Caco-2 (cell line): ENCODE measurements at regions of chr14 and their contacts with region 1.

Region 1: GRCh38 chr14:45134051-45134958 is at the start of gene FKBP3:
- DNase-seq: peak; percentile 95 to 98
- H3K4me3 ChIP-seq: peak within 1 kb of the TSS; percentile 51
- H3K4me3 Mint-ChIP-seq: peak within 1 kb of the TSS; percentile 97
- H3K27ac Mint-ChIP-seq: peak within 1 kb of the TSS; percentile 95
- H3K4me1 ChIP-seq: peaks cover 8% of the 10 kb centered on the region; the same call in 1 of the 2 replicates
- H3K4me1 Mint-ChIP-seq: peaks cover 14% of the 10 kb centered on the region
- H3K27me3 ChIP-seq: no peaks in the 10 kb centered on the region
- H3K27me3 Mint-ChIP-seq: no peaks in the 10 kb centered on the region
- CTCF ChIP-seq: no peak
- total RNA-seq, gene FKBP3: 94.2 and 94.8 TPM in 2 replicates

Region 2: DNA sequence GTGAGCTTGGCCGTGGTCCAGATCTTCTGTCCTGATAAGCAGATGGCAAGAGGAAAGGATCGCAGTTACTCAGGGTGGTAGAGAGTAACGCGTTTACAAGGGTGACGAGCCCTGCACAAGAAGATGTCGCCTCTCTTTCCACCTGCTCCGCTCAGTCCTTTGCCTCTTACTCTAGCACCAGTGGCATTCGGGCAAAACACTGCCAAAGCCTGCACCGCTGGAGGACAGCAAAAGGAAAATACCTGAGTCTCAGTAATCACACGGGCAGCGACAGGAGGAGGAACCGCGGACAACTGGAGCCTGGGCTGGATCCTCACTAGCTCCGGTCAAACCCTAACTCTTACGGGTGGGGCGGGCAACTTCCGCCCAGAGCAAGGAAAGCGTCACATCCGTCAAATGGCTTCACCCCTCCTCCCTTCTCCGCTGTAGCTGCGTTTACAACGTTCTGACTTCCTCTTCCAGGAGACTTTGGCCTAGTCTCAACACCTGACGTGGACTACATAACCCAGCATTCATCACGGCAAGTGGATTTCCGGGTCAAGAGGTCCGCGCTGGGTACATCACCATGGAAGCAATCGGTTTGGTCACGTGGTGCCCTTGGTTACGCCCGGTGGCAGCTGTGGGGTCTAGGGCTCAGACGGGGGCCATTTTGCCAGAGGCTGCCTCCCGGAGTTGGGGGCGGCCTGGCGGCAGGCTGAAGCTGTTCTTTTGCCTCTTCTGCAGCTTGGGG is 172.5 kb before region 1 on chr14 and contains the starts of genes KLHL28 and TOGARAM1:
- CTCF ChIA-PET with region 1: no interaction called
- POLR2A ChIA-PET with region 1: no interaction called
- intact Hi-C with region 1: loop called (anchors 1 kb)
- DNase-seq: peak; percentile 90 to 95
- H3K4me3 ChIP-seq: peak within 1 kb of the TSS; percentile 63
- H3K4me3 Mint-ChIP-seq: no peak within 1 kb of the TSS
- H3K27ac Mint-ChIP-seq: no peak within 1 kb of the TSS
- H3K4me1 ChIP-seq: no peaks in the 10 kb centered on the region
- H3K4me1 Mint-ChIP-seq: peaks cover 8% of the 10 kb centered on the region
- H3K27me3 ChIP-seq: no peaks in the 10 kb centered on the region
- H3K27me3 Mint-ChIP-seq: no peaks in the 10 kb centered on the region
- CTCF ChIP-seq: no peak
- total RNA-seq, gene KLHL28: 3.6 and 4.7 TPM in 2 replicates
- total RNA-seq, gene TOGARAM1: 5.9 and 7.1 TPM in 2 replicates

Region 3: DNA sequence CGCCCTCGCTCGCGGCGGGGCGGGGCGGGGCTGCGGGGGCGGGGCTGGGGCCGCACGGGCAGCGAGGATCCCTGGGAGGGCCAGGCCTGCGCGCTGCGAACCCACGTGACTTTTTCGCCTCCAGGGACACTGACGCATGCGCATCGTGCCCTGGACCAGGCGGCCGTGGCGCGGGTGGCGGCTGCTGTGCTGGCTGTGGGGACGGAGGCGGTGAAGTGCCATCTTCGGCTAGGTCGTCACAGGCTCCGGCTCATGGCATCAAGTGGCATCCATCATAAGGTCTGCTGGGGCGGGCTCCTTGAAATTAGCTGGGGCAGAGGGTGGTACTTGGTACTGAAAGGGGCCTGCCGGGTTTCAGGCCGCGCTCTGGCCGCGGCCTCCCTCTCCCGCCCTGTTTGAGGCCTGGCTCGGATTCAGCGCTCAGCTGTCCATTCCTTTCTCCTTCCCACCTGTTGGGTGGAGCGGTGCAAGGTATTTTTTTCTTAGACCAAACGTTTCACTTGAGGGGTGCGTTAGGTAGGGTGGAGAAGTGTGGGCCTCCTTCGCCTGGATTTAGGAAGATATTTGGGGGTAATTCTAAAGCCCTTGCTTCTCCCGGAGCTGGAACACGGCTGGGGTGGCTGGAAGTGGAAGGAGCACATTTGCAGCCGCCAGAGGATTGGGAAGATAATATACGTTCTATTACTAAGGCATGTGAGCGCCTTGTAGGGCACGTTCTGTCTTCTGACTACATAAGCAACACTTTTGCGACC is 50.2 kb before region 1 on chr14 and contains the start of gene PRPF39:
- CTCF ChIA-PET with region 1: no interaction called
- POLR2A ChIA-PET with region 1: no interaction called
- intact Hi-C with region 1: loop called (anchors 2 kb)
- DNase-seq: peak; percentile 87 to 91
- H3K4me3 ChIP-seq: peak within 1 kb of the TSS; percentile 49
- H3K4me3 Mint-ChIP-seq: peak within 1 kb of the TSS; percentile 85
- H3K27ac Mint-ChIP-seq: peak within 1 kb of the TSS; percentile 87
- H3K4me1 ChIP-seq: no peaks in the 10 kb centered on the region
- H3K4me1 Mint-ChIP-seq: peaks cover 17% of the 10 kb centered on the region
- H3K27me3 ChIP-seq: no peaks in the 10 kb centered on the region
- H3K27me3 Mint-ChIP-seq: no peaks in the 10 kb centered on the region
- CTCF ChIP-seq: no peak
- total RNA-seq, gene PRPF39: 22.3 and 30.0 TPM in 2 replicates

Region 4: DNA sequence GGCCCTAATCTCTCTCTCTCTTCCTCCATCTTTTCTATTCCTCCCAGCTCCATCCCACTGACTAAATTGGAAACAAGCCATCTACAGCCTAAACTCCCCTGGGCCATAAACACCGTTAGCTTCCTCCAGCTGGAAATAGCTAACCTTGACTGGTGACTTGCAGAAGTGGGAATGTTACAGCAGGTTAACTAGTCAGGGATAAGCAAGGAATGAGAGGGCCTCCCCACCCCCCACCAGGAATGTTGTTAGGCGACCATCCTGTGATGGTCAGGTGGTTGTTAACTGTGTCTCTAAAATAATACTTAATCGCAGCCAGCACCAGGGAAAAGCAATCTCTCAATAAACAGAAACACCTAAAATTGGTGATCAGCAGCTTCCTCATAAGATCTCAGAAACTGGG is 77.9 kb after region 1 on chr14:
- CTCF ChIA-PET with region 1: no interaction called
- POLR2A ChIA-PET with region 1: interaction called, 4 read pairs
- intact Hi-C with region 1: loop called (anchors 1 kb)
- DNase-seq: peak; percentile 73 to 79
- H3K4me3 ChIP-seq: no peak overlapping the region
- H3K4me3 Mint-ChIP-seq: peak overlapping the region; percentile 48
- H3K27ac Mint-ChIP-seq: peak overlapping the region; percentile 54
- H3K4me1 ChIP-seq: peaks cover 62% of the 10 kb centered on the region
- H3K4me1 Mint-ChIP-seq: peaks cover 30% of the 10 kb centered on the region
- H3K27me3 ChIP-seq: no peaks in the 10 kb centered on the region
- H3K27me3 Mint-ChIP-seq: no peaks in the 10 kb centered on the region
- CTCF ChIP-seq: no peak

Region 5: GRCh38 chr14:45267071-45267470 is 132.8 kb after region 1 on chr14:
- CTCF ChIA-PET with region 1: interaction called, 4 read pairs
- POLR2A ChIA-PET with region 1: no interaction called
- intact Hi-C with region 1: loop called (anchors 1 kb)
- DNase-seq: no peak
- H3K4me3 ChIP-seq: no peak overlapping the region
- H3K4me3 Mint-ChIP-seq: no peak overlapping the region
- H3K27ac Mint-ChIP-seq: no peak overlapping the region
- H3K4me1 ChIP-seq: no peaks in the 10 kb centered on the region
- H3K4me1 Mint-ChIP-seq: no peaks in the 10 kb centered on the region
- H3K27me3 ChIP-seq: no peaks in the 10 kb centered on the region
- H3K27me3 Mint-ChIP-seq: no peaks in the 10 kb centered on the region
- CTCF ChIP-seq: no peak